ENCODE measurements at regions of chr14 and their contacts with region 1.

Region 1: DNA sequence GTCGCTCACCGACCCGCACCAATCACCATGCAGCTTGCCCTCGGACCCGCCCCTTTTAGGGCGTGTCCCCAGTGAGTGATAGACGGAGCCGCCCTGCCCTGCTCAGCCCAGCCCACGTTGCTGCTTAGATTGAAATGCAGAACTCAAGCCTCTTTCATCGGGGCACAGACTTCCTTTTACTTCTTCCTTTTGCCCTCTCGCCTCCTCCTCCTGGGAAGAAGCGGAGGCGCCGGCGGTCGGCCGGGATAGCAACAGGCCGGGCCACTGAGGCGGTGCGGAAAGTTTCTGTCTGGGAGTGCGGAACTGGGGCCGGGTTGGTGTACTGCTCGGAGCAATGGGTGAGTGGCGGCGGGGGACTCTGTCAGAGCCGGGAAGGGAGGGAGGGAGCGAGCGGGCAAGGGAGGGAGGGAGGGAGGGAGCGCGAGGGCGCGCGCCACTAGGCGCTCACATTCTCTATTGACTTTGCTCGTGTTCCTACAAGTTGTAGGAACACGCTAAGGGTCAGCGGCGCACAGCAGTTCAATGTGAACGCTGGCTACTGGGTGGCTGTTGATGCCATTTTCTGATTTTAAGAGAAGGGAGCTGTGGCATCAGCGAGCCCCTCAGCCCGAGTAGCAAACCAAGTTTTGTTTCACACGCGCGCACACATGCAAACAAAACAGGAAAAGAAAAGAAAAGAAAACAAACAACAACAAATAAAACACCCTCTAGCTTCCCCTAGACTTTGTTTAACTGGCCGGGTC is at the start of gene PAX9:
- DNase-seq: peak; percentile 64
- H3K4me3 Mint-ChIP-seq: peak within 1 kb of the TSS; percentile 15
- H3K27ac Mint-ChIP-seq: peak within 1 kb of the TSS; percentile 65
- H3K4me1 Mint-ChIP-seq: peaks cover 10% of the 10 kb centered on the region
- H3K27me3 Mint-ChIP-seq: peaks cover 87% of the 10 kb centered on the region
- total RNA-seq, gene PAX9: not detected in 2 replicates

Region 2: GRCh38 chr14:36454599-36455240 is 207.2 kb before region 1 on chr14:
- intact Hi-C with region 1: no loop called
- DNase-seq: peak; percentile 18
- H3K4me3 Mint-ChIP-seq: no peak overlapping the region
- H3K27ac Mint-ChIP-seq: no peak overlapping the region
- H3K4me1 Mint-ChIP-seq: no peaks in the 10 kb centered on the region
- H3K27me3 Mint-ChIP-seq: peaks cover 3% of the 10 kb centered on the region

Region 3: GRCh38 chr14:36690301-36691033 is 28.5 kb after region 1 on chr14:
- intact Hi-C with region 1: no loop called
- DNase-seq: no peak
- H3K4me3 Mint-ChIP-seq: no peak overlapping the region
- H3K27ac Mint-ChIP-seq: no peak overlapping the region
- H3K4me1 Mint-ChIP-seq: no peaks in the 10 kb centered on the region
- H3K27me3 Mint-ChIP-seq: no peaks in the 10 kb centered on the region

Region 4: DNA sequence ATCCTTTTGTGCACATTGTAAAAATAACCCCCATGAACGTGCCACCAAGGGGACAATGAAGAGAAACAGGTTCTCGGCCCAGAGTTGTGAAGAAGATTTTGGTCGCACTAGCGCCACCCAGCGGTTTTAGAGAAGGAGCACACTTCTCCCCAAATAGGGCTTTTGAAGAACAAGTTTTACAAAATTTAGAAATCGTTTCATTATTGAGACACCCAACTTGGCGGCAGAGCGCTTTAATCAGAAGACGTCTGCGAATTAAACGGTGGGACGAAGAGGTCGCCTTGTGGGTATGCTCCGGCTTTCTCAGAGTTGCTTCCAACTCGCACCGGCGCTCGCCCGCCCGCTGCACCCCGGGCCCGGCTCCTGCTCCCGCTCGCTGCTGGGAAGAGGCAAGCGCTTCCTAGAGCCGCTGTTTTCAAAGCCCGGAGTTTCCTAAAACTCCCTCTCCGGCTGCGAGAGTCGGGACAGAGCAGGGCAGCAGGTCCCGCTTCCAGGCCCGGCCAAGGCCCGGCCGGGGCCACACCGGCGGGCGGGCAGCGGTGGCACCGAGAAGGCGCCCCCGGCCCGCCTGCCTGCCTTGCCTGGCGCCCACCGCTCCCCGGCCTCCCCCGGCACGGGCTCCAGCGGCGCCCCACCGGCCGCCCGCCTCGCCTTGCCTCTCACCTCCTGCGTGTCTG is 932.4 kb after region 1 on chr14:
- intact Hi-C with region 1: loop called (anchors 2 kb)
- DNase-seq: peak; percentile 70
- H3K4me3 Mint-ChIP-seq: peak overlapping the region; percentile 62
- H3K27ac Mint-ChIP-seq: peak overlapping the region; percentile 76
- H3K4me1 Mint-ChIP-seq: peaks cover 9% of the 10 kb centered on the region
- H3K27me3 Mint-ChIP-seq: peaks cover 72% of the 10 kb centered on the region